Lower leg skin (tissue), 4 donors: ENCODE measurements at regions of chr11 and their contacts with region 1.

Region 1: GRCh38 chr11:45771566-45772448 is 33.1 kb upstream of the SLC35C1 start:
- DNase-seq: peak; percentile 67 to 96
- H3K4me3 ChIP-seq: peak overlapping the region; percentile 32
- CTCF ChIP-seq: peak in 1 of 3 donors; percentile 74
- POLR2A ChIP-seq: no peak

Region 2: GRCh38 chr11:45339729-45340519 is 431.9 kb before region 1 on chr11:
- intact Hi-C with region 1: loop called (anchors 10 kb)
- DNase-seq: peak; percentile 91 to 98
- H3K4me3 ChIP-seq: no peak overlapping the region
- CTCF ChIP-seq: peak in 2 of 3 donors; percentile 42 to 78
- POLR2A ChIP-seq: no peak

Region 3: DNA sequence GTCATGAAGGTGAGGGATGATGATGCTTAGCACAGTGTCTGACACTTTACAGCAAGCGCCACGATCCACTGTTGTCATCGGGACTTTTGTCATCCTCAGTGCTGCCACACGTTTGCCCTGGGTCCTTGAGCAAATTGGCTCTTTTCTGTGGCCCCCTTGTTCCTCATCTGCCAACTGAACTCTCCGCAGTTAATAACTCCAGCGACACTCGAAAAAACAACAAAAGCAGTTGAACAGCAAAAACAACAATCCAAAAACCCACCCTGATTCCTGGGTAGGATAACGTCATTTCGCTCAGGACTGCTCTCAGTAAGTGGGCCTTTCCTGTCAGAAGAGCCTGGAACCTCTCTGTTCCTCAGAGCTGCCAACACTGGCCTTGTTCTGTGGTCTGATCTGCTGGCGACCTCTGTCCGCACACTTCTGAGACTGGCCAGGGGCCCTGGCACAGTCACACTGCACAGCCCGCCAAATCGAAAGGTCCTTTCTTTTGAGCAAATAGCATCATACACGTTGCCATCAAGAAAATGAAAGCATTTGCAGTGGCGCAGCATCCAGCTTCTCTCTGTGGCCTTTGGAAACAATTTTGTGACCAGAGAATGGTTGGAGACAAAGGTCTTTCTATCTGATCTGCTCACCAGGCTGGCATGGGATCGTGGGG is 405.7 kb before region 1 on chr11:
- intact Hi-C with region 1: loop called (anchors 10 kb)
- DNase-seq: peak in 1 of 2 donors; percentile 56
- H3K4me3 ChIP-seq: no peak overlapping the region
- CTCF ChIP-seq: no peak
- POLR2A ChIP-seq: no peak